ENCODE measurements at regions of chr1 and their contacts with region 1.

Region 1: DNA sequence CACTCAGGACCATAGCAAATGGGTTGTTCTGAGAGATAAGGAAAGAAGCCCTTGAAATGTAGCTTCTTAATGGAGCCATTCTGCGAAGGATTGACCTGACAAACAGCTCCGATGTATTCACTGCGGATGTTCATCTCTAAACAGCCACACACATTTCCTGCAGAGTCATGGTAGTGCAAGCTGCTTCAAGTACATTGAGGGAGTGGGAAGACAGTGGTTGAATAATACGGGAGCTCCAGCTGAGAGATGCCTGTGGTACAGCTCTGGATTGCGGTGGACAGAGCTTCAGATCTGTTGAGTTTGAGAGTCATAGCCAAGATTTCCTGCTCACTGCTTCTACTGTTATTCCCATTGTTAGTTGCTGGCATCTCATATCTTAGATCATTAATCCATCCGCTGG is 86.6 kb downstream of the ZBTB18 start:
- DNase-seq: no peak
- H3K4me3 ChIP-seq: no peak overlapping the region
- H3K4me3 Mint-ChIP-seq: no peak overlapping the region
- H3K27ac Mint-ChIP-seq: no peak overlapping the region
- H3K4me1 ChIP-seq: no peaks in the 10 kb centered on the region
- H3K4me1 Mint-ChIP-seq: peaks cover 5% of the 10 kb centered on the region
- H3K27me3 ChIP-seq: no peaks in the 10 kb centered on the region; the same call in 1 of the 2 replicates
- H3K27me3 Mint-ChIP-seq: peaks cover 7% of the 10 kb centered on the region
- CTCF ChIP-seq: no peak

Region 2: GRCh38 chr1:244171241-244171985 is 33.7 kb after region 1 on chr1:
- CTCF ChIA-PET with region 1: no interaction called
- POLR2A ChIA-PET with region 1: no interaction called
- intact Hi-C with region 1: loop called (anchors 2 kb)
- DNase-seq: no peak
- H3K4me3 ChIP-seq: no peak overlapping the region
- H3K4me3 Mint-ChIP-seq: no peak overlapping the region
- H3K27ac Mint-ChIP-seq: no peak overlapping the region
- H3K4me1 ChIP-seq: peaks cover 9% of the 10 kb centered on the region
- H3K4me1 Mint-ChIP-seq: peaks cover 10% of the 10 kb centered on the region
- H3K27me3 ChIP-seq: no peaks in the 10 kb centered on the region
- H3K27me3 Mint-ChIP-seq: no peaks in the 10 kb centered on the region
- CTCF ChIP-seq: no peak